ENCODE measurements at regions of chr6 and their contacts with region 1.

Region 1: DNA sequence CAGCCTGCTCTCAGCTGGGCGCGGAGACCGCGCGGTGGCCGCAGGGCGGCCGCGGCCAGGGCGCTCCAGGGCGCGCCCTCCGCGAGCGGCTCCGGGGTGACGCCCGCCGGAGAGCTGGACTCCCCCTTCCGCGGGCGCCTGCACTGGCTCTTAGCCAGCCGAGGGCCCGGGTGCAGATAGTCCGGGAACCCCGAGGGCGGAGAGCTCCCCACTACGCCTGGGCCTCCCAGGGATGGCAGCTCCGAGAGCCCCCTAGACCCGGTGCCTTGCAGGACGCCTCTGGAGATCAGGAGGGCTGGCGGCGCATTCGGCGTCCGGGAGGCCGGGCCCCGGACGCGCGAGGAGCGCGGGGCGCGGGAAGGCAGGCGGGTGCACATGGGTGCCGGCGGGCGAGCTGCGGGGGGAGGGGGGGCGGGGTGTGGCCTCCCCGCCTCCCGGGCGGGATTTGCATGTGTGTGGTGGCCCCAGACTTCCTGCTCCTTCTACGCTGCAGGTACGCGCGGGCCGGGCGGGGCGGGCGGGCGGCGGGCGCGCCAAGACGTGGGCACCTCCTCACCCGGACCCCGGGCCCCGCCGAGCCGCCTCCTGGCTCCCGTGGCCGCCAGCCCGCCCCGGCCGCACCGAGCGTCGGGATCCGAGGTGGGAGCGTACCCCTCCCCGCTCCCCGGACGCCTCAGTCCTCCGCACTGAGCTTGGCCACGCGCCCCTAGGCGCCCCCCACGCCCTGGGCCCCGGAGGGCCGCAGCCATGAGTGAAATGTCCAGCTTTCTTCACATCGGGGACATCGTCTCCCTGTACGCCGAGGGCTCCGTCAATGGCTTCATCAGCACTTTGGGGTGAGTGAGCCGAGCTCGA is at the start of gene ITPR3:
- DNase-seq: no peak
- H3K4me3 ChIP-seq: peak within 1 kb of the TSS; percentile 63
- CTCF ChIP-seq: no peak

Region 2: DNA sequence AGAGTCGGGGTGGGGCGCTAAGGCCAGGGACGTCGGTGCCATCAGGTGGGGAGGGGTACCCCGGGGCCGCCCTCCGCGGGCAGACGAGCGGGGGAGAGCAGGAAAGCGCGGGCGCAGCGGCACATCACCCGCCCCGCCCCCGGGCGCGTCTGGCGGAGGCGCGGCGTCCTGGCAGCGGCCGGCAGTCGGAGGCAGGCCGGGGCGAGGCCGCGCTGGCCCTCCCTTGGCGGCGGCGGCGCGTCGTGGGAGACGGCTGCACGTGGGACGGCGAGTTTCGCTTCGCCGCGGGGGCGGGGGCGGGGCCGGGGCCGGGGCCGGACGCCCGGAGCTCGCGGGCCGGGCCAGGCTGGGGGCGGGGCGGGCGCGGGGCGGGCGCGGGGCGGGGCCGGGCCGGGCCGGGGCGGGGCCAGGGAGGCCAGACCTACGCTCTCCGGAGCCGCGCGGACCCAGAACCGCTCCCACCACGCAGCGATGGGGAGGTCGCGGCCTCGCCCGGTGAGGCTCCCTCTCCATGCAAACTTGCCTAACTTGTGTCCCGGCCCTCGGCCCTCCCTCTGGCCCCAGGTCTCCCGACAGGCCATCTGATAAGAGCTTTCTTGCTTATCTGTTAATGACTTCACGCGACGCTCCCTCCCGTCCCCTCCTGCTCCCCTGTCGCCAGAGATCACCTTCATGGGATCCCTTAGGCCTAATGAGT is 12.5 kb after region 1 on chr6:
- CTCF ChIA-PET with region 1: interaction called, 30 read pairs
- POLR2A ChIA-PET with region 1: interaction called, 4 read pairs
- DNase-seq: no peak
- H3K4me3 ChIP-seq: peak overlapping the region; percentile 61
- CTCF ChIP-seq: no peak

Region 3: DNA sequence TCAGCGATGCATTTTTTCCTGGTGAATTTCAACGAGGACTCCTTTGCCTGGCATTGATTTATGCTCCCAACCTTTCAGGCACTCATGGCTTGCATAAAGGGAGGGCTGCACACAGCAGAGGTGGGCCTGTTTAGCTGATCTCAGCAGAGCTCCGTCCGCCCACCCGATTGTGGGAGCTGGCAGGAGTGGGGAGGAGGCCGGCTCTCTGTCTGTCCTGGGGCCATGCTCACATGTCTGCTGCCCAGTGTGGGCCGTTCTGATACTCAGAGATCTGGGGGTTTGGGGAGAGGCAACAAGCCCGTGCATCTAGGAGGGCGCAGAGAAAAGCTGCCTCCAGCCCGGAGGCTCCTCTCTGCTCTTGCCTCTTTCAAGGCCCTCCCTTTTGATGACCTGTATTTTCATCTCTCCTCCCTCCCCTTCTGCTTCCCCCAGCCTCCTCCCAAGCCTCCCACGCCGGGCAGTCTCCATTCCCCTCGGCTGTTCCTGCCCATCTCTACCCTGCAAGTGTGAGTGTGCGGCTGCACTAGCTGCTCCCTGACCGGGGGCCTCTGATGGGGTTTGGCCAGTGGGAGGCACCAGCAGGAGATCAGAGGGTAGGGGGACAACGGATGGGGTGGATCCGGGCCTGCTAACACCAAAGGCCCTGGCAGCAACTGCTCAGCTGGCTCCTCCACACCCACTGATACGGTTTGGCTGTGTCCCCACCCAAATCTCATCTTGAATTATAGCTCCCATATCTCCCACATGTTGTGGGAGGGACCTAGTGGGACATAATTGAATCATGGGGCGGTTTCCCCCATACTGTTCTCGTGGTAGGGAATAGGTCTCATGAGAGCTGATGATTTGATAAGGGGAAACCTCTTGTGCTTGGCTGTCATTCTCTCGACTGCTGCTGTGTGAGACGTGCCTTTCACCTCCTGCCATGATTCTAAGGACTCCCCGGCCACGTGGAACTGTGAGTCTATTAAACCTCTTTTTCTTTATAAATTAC is 222.3 kb after region 1 on chr6:
- CTCF ChIA-PET with region 1: no interaction called
- POLR2A ChIA-PET with region 1: no interaction called
- DNase-seq: no peak
- H3K4me3 ChIP-seq: no peak overlapping the region
- CTCF ChIP-seq: no peak